ENCODE measurements at regions of chr19 and their contacts with region 1.

Region 1: DNA sequence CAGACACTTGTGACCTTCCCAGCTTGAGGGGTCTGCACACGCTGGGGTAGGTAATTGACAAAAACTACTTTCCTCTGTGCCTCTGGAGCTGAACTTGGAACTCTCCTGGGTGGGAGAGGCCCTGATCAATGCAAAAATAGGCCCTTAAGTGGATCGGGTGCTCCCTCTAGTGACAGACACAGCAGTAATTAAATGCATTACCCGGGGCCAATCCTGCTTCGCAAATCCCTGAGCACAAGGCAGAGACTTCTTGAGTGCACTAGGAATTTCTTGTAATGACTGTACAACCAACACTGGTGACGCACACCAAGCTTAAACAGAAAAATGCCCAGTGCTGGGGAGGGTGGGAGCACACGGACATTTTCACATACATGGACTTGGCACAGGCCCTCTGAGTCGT is 10.6 kb upstream of the UBE2S start:
- DNase-seq: peak; percentile 91
- ATAC-seq: peak; percentile 99
- H3K4me3 ChIP-seq: no peak overlapping the region
- H3K27ac ChIP-seq: no peak overlapping the region
- H3K4me1 ChIP-seq: no peaks in the 10 kb centered on the region
- H3K27me3 ChIP-seq: peaks cover 11% of the 10 kb centered on the region
- CTCF ChIP-seq: peak; percentile 95
- POLR2A ChIP-seq: 0 out of 2 replicates have a peak, but pooled peaks have one; percentile 26
- RAD21 ChIP-seq: peak; percentile 95

Region 2: DNA sequence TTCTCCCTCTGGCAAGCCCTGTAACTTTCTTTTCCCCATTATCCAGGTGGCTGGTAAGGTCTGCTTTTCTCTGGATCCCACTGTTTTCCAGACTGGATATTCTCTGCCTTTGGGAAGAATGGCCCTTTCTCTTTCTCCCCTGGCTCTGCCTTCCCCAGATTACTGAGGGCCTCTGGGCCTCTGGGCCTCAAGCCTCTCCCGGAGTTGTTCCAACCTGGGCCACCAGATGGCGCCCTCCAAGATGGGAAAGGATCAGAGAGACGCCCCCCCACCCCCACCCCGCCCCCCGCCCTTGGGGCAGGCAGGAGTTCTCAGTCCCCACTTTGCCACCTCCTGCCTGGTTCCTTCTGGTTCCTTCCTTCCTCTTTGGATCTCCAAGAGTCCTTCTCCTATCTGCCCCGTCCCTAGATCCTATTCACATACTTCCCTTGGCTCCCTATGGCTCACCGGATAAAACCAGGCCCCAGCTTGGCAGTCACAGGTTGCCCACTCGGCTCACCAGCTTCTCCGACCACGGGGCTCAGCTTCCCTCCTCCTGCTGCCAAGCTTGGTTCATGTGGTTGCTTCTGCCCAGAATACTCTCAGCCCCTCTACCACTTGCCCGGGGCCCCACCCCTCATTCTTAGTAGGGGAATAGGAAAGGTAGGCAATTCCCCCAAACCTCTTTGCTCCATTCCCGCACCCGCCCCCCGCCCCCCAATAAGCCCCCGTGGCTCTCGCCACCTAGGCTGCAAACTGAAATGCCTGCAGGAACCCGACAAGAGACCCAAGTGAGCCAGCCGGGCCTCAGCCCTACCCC is 329.4 kb before region 1 on chr19:
- CTCF ChIA-PET with region 1: no interaction called
- POLR2A ChIA-PET with region 1: no interaction called
- dilution Hi-C with region 1: no loop called
- in situ Hi-C with region 1: no loop called
- intact Hi-C with region 1: loop called (anchors 1 kb)
- DNase-seq: peak; percentile 43
- ATAC-seq: peak; percentile 38
- H3K4me3 ChIP-seq: no peak overlapping the region
- H3K27ac ChIP-seq: no peak overlapping the region
- H3K4me1 ChIP-seq: peaks cover 6% of the 10 kb centered on the region; the same call in 1 of the 2 replicates
- H3K27me3 ChIP-seq: peaks cover 20% of the 10 kb centered on the region
- CTCF ChIP-seq: peak; percentile 51
- POLR2A ChIP-seq: no peak
- RAD21 ChIP-seq: peak; percentile 25

Region 3: DNA sequence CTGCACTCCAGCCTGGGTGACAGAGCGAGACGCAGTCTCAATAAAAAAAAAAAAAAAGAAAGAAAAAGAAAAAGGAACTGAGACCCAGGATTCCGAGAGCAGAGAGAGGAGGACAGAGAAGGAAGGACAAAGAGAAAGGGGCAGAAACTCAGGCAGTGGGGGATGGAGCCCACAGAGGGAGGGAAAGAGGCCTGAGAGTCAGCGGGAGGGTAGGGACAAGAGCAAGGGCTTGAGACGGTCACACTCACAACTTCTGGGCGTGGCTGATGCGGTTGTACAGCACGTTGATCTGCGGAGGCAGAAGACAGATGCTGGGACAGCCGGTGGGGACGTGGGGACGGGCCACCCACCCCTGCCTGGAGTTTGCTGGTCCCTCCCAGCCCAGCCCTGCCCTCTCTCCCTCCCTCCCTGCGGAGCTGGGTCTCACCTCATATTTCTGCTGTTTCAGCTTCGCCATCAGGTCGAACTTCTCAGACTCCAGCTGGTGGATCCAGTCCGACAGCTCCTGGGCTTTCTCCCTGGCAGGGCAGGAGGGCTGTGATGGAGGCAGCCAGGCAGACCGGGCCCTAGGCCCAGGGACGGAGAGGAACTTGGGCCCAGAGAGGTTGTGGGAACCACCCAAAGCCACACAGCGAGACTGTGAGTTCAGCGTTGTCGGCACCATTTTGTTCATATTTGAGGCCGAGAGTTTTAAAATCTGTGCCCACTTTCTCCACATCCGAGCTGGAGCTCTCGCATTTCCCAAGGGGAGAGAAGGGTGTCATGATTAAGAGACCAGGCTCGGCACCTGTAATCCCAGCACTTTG is 284.3 kb before region 1 on chr19:
- CTCF ChIA-PET with region 1: interaction called, 12 read pairs
- POLR2A ChIA-PET with region 1: no interaction called
- dilution Hi-C with region 1: no loop called
- in situ Hi-C with region 1: loop called (anchors 5 kb)
- intact Hi-C with region 1: no loop called
- DNase-seq: no peak
- ATAC-seq: no peak
- H3K4me3 ChIP-seq: no peak overlapping the region
- H3K27ac ChIP-seq: no peak overlapping the region
- H3K4me1 ChIP-seq: no peaks in the 10 kb centered on the region
- H3K27me3 ChIP-seq: peaks cover 32% of the 10 kb centered on the region
- CTCF ChIP-seq: no peak
- POLR2A ChIP-seq: no peak
- RAD21 ChIP-seq: no peak

Region 4: DNA sequence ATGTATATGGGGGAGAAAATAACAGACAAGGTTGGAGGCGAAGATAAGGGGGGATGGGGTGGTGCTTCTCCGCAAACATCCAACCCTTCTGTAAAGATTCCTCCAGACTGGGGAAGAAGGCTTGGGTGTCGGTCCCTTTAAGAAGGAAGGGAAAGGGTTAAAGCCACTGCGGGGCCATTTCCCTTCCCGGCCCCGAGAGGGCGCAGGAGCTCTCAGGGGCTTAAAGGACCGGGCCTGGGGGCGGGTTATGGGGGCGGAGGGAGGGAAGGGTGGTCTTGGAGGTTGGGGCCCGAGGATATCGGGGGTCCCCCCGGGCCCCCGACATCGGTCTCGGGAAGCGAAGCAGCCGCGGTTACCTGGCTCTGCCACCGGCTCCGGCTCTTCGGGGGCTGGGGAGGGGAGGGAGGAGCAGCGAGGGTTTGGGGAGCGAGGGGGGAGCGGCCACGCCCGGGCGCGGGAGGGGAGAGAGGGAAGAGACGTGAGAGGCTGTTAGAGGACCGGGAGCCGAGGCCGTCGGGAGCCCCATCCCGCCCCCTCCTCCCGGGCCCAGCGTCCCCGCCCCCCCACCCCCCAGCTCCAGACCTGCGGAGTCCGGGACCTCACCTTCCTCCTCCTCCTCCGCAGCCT is 272.0 kb before region 1 on chr19:
- CTCF ChIA-PET with region 1: interaction called, 4 read pairs
- POLR2A ChIA-PET with region 1: no interaction called
- dilution Hi-C with region 1: no loop called
- in situ Hi-C with region 1: no loop called
- intact Hi-C with region 1: loop called (anchors 1 kb)
- DNase-seq: no peak
- ATAC-seq: 0 out of 2 replicates have a peak, but pooled peaks have one; percentile 15
- H3K4me3 ChIP-seq: no peak overlapping the region
- H3K27ac ChIP-seq: no peak overlapping the region
- H3K4me1 ChIP-seq: peaks cover 1% of the 10 kb centered on the region; the same call in 1 of the 2 replicates
- H3K27me3 ChIP-seq: peaks cover 53% of the 10 kb centered on the region
- CTCF ChIP-seq: peak; percentile 50
- POLR2A ChIP-seq: no peak
- RAD21 ChIP-seq: peak; percentile 30; the same call in 1 of the 2 replicates

Region 5: DNA sequence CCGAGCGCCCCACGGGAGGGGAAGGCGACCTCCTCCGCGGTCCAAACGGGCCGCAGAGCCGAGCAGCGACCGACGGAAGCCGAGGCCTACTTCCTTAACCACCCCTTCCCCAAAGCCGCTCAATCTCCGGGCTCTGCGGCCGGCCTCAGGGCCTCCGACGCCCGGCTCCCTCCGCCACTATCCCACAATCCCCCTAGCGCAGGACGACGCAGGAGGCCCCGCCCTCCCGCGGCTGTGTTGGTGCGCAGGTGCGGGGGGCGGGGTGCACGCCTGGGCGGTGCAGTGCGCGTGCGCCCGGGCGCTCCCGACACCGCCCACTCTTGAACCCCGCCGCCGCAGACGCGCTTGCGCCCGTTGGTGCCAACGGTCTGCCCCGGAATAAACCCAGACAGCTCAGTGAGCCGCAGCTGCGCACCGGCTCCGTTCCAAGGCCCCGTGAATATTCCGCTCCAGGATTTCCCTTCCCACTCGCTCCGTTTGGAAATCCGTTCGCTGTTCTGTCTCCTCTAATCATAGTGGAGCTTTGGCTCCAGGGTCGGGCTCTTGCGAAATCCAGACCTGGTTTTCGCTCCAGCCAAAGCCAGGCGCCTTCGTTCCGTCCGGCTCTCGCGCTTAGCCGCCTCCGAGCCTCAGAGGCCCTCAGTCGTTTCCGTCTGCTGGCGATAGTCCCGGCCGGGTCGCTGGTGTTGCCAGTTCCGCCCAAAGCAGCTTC is 159.2 kb before region 1 on chr19 and contains the start of gene PPP6R1:
- CTCF ChIA-PET with region 1: interaction called, 4 read pairs
- POLR2A ChIA-PET with region 1: no interaction called
- dilution Hi-C with region 1: no loop called
- in situ Hi-C with region 1: no loop called
- intact Hi-C with region 1: loop called (anchors 2 kb)
- DNase-seq: peak; percentile 100
- ATAC-seq: peak; percentile 94
- H3K4me3 ChIP-seq: peak within 1 kb of the TSS; percentile 68
- H3K27ac ChIP-seq: peak within 1 kb of the TSS; percentile 88
- H3K4me1 ChIP-seq: peaks cover 16% of the 10 kb centered on the region
- H3K27me3 ChIP-seq: no peaks in the 10 kb centered on the region
- CTCF ChIP-seq: no peak
- POLR2A ChIP-seq: peak; percentile 90
- RAD21 ChIP-seq: peak; percentile 37
- total RNA-seq, gene PPP6R1: 19.9 and 20.0 TPM in 2 replicates

Region 6: GRCh38 chr19:55289117-55289796 is 128.9 kb before region 1 on chr19:
- CTCF ChIA-PET with region 1: interaction called, 3 read pairs
- POLR2A ChIA-PET with region 1: no interaction called
- dilution Hi-C with region 1: no loop called
- in situ Hi-C with region 1: no loop called
- intact Hi-C with region 1: loop called (anchors 1 kb)
- DNase-seq: no peak
- ATAC-seq: no peak
- H3K4me3 ChIP-seq: no peak overlapping the region
- H3K27ac ChIP-seq: no peak overlapping the region
- H3K4me1 ChIP-seq: peaks cover 8% of the 10 kb centered on the region
- H3K27me3 ChIP-seq: no peaks in the 10 kb centered on the region
- CTCF ChIP-seq: no peak
- POLR2A ChIP-seq: no peak
- RAD21 ChIP-seq: no peak

Region 7: DNA sequence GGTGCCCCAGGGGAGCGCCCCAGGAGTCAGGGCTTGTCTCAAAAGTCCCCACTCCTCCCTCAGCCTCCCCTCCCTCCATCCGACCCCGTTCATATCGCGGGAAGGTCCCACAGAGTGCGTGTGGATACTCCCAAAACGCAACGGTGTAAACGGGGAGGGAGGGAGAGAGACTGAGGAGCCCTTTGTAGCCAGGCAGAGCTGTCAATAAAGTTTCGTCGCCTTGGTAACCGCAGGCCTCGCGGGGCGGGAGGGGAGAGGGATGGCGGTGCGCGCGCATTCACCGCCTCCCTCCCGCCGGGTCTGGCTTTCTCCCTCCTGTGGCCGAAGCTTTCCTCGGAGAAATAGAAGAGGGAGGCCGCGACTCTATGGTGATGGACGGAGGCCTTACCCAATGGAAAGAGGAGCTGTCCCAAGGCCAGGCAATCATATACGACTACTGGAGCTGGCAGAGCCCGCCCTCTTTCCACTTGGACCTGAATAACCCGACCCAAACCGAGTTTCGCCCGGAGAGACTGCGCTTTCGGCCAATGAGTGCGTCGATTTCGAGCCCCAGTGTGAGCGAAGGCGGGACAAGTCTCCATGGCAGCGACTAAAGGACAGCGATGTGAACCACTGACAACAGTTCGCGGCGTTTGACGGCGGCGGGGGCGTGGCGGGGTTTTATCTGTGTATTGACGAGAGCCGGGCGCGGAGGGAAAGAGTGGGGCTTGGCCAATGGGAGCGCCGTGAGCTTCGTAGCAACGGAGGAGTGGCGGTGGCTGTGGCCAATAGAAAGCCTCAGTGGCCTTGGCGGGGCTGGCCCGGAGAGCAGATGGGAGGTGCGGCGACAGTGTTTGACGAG is 78.9 kb before region 1 on chr19 and contains the start of gene KMT5C:
- CTCF ChIA-PET with region 1: no interaction called
- POLR2A ChIA-PET with region 1: no interaction called
- dilution Hi-C with region 1: no loop called
- in situ Hi-C with region 1: no loop called
- intact Hi-C with region 1: no loop called
- DNase-seq: peak; percentile 100
- ATAC-seq: peak; percentile 93
- H3K4me3 ChIP-seq: peak within 1 kb of the TSS; percentile 87
- H3K27ac ChIP-seq: peak within 1 kb of the TSS; percentile 88
- H3K4me1 ChIP-seq: peaks cover 9% of the 10 kb centered on the region
- H3K27me3 ChIP-seq: no peaks in the 10 kb centered on the region
- CTCF ChIP-seq: peak; percentile 55
- POLR2A ChIP-seq: peak; percentile 59; the same call in 1 of the 2 replicates
- RAD21 ChIP-seq: peak; percentile 21; the same call in 1 of the 2 replicates
- total RNA-seq, gene KMT5C: 1.8 and 1.9 TPM in 2 replicates

Region 8: DNA sequence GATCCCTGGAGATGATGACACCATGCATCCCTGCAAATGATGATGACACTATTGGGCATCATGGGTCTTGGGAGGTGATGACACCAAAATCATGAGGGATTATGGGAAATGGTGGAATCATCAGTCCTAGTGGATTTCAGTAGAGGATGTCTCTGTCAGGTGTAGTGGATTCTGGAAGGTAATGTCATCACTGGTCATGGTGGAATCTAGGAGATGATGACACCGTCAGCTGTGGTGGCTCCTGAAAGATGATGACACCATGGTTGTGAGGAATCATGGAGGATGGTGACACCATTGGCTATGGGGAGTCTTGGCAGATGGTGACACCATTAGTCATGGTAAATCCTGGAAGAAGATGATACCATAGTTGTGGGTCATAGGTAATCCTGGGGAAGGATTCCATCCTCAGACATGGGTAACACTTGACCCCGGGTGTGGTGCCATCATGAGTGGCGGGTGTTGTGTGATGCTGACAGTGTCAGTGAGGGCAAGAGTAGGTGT is 13.0 kb after region 1 on chr19:
- CTCF ChIA-PET with region 1: no interaction called
- POLR2A ChIA-PET with region 1: no interaction called
- dilution Hi-C with region 1: no loop called
- in situ Hi-C with region 1: no loop called
- intact Hi-C with region 1: no loop called
- DNase-seq: no peak
- ATAC-seq: no peak
- H3K4me3 ChIP-seq: no peak overlapping the region
- H3K27ac ChIP-seq: no peak overlapping the region
- H3K4me1 ChIP-seq: no peaks in the 10 kb centered on the region
- H3K27me3 ChIP-seq: peaks cover 21% of the 10 kb centered on the region
- CTCF ChIP-seq: no peak
- POLR2A ChIP-seq: no peak
- RAD21 ChIP-seq: no peak

Region 9: DNA sequence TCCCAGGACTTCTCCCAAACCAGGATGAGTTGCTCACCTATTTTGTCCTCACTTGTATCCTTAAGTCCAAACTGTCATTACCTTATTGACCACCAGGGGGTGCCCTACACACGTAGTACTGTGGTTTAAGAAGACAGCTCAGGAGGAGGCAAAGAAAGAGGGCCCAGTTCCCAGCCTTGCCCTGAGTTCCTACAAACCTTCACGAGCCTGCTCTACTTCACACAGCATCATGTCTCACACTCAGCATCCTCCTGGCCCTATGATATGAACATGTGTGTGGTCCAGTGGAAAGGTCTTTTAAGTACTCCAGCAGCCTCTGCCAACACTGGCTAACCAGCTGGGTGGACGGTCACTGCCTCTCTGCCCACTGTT is 214.3 kb after region 1 on chr19:
- CTCF ChIA-PET with region 1: no interaction called
- POLR2A ChIA-PET with region 1: no interaction called
- dilution Hi-C with region 1: no loop called
- in situ Hi-C with region 1: no loop called
- intact Hi-C with region 1: no loop called
- DNase-seq: peak; percentile 96
- ATAC-seq: peak; percentile 73
- H3K4me3 ChIP-seq: no peak overlapping the region
- H3K27ac ChIP-seq: no peak overlapping the region
- H3K4me1 ChIP-seq: peaks cover 9% of the 10 kb centered on the region
- H3K27me3 ChIP-seq: no peaks in the 10 kb centered on the region
- CTCF ChIP-seq: peak; percentile 85
- POLR2A ChIP-seq: 0 out of 2 replicates have a peak, but pooled peaks have one; percentile 42
- RAD21 ChIP-seq: peak; percentile 79

Measured in IMR-90 (cell line).